OCI-LY7 (cell line): ENCODE measurements at regions of chr4 and their contacts with region 1.

Region 1: GRCh38 chr4:42638993-42639392 is 17.9 kb downstream of the ATP8A1 start:
- DNase-seq: peak; percentile 87
- H3K4me3 ChIP-seq: peak overlapping the region; percentile 65
- H3K27ac ChIP-seq: peak overlapping the region; percentile 99
- H3K4me1 ChIP-seq: peaks cover 97% of the 10 kb centered on the region
- CTCF ChIP-seq: no peak

Region 2: DNA sequence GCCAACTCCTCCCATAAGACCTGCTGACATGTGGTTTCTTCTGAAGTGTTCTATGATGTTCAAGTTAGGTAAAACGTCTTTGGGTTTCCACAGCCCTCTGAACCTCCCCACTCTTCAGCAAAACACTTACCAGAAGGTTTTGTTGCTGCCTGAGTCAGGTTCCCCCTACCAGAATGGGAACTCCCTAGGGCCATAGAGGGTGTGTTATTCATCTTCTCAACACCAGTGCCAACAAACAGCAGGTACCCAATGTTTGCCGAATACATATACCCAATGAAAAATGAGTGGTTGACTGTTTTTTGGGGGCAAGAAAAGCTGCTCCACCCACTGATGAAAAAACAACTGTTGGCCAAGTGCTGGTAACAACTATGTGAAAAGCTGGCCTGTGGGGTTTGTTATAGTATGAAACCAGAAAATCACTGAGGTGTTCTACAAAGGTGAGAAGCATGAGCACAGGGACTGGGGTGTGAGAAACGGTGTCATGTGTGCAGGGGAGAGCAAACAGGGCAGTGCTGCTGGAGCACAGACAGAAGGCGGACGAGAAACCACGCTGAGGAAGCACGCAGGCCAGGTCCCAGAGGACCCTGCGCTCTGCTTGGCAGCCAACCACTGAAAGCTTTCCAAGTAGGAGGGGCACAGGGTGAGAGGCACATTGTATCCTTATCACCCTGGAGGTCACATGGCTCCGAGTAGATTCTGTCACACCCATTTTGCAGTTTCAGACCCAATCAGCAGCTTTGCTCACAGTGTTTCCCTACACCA is 10.9 kb before region 1 on chr4:
- CTCF ChIA-PET with region 1: interaction called, 6 read pairs
- POLR2A ChIA-PET with region 1: interaction called, 35 read pairs
- intact Hi-C with region 1: no loop called
- DNase-seq: peak; percentile 81
- H3K4me3 ChIP-seq: peak overlapping the region; percentile 44
- H3K27ac ChIP-seq: peak overlapping the region; percentile 73
- H3K4me1 ChIP-seq: peaks cover 89% of the 10 kb centered on the region
- CTCF ChIP-seq: no peak

Region 3: DNA sequence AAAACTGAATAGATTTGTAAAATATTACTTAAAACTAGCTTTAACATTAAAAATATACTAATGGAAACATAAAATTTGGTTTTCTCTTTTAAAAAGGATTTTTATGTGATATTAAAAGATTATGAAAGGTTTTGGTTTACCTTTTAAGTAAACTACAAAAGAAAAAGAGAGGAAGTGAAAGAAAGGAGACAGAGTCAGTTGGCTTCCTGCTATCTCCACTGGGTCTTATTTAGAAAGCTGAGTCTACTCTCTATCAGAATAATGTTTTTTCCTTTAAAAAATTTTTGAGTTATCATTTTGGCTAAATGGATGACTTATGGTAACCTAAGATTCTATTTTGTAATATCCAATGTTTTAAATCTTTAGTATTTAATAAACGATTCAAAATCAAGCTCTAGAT is 39.5 kb after region 1 on chr4:
- CTCF ChIA-PET with region 1: no interaction called
- POLR2A ChIA-PET with region 1: interaction called, 35 read pairs
- intact Hi-C with region 1: no loop called
- DNase-seq: peak; percentile 65
- H3K4me3 ChIP-seq: peak overlapping the region; percentile 15
- H3K27ac ChIP-seq: peak overlapping the region; percentile 64
- H3K4me1 ChIP-seq: peaks cover 23% of the 10 kb centered on the region
- CTCF ChIP-seq: no peak

Region 4: GRCh38 chr4:42954963-42955669 is 316.1 kb after region 1 on chr4:
- CTCF ChIA-PET with region 1: no interaction called
- POLR2A ChIA-PET with region 1: no interaction called
- intact Hi-C with region 1: no loop called
- DNase-seq: no peak
- H3K4me3 ChIP-seq: no peak overlapping the region
- H3K27ac ChIP-seq: no peak overlapping the region
- H3K4me1 ChIP-seq: no peaks in the 10 kb centered on the region
- CTCF ChIP-seq: no peak